Activated CD4-positive, alpha-beta T cell treated with anti-CD3 and anti-CD28 coated beads, Interleukin-2, amount 10 ng/mL, durations not matched to agents 7 days and 5 days (primary cell): ENCODE measurements at regions of chr1 and their contacts with region 1.

Region 1: GRCh38 chr1:156892190-156893047 is 1.1 kb upstream of the PEAR1 start:
- DNase-seq: peak; percentile 87
- H3K4me3 Mint-ChIP-seq: peak overlapping the region; percentile 63
- H3K27ac Mint-ChIP-seq: peak overlapping the region; percentile 65
- H3K4me1 Mint-ChIP-seq: peaks cover 24% of the 10 kb centered on the region
- H3K27me3 Mint-ChIP-seq: peaks cover 50% of the 10 kb centered on the region

Region 2: DNA sequence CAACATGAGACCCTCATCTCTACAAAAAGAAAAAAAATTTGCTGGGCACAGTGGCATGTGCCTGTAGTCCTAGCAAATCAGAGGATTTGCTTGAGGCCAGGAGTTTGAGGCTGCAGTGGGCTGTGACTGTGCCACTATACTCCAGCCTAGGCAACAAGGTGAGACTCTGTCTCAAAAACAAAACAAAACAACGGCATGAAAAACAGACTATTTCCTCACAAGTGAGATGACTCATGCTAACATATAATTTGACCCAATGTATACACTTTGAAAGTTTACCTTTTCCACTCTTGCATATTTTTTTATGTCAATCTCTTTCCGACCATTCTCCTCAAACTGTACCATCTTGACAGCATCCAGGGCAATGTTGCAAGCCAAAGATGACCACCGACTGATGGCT is 571.9 kb before region 1 on chr1:
- CTCF ChIA-PET with region 1: no interaction called
- POLR2A ChIA-PET with region 1: no interaction called
- DNase-seq: no peak
- H3K4me3 Mint-ChIP-seq: no peak overlapping the region
- H3K27ac Mint-ChIP-seq: no peak overlapping the region
- H3K4me1 Mint-ChIP-seq: no peaks in the 10 kb centered on the region
- H3K27me3 Mint-ChIP-seq: no peaks in the 10 kb centered on the region

Region 3: DNA sequence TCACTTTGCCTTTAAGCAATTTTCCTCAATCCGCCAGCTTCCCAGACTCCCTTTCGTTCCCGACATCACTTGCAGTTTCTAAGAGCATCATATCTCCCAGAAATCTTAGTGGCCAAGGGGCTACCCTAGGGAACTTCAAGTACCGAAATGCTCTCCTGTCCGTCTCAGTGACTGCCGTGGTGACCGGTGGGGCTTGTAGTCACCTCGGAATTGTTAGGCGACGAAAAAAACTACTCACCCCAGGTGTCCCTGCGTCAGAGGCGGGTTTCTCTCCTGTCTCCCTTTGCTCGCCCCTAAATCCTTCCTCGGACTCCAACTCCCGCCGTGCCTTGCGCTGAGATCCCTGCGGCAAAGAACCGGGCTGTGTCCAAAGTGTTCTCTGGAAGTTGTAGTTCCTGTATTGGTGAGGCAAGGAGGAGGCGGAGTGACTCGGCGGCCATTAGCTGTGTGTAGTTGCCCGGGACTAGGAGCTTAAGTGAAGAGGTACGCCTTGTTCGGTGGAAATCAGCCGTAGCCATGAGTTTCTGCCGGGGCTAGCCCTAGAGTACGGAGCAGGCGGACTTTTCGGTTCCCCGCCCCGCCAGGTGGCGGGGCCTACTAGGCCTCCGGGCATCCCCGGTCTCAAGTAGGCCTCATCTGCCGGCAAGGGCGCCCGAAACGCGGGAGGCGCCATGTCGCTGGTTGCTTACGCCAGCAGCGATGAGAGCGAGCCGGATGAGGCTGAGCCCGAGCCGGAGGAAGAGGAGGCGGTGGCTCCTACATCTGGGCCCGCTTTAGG is 125.1 kb before region 1 on chr1 and contains the start of gene PRCC:
- CTCF ChIA-PET with region 1: interaction called, 11 read pairs
- POLR2A ChIA-PET with region 1: interaction called, 4 read pairs
- DNase-seq: peak; percentile 99
- H3K4me3 Mint-ChIP-seq: no peak within 1 kb of the TSS
- H3K27ac Mint-ChIP-seq: no peak within 1 kb of the TSS
- H3K4me1 Mint-ChIP-seq: peaks cover 41% of the 10 kb centered on the region
- H3K27me3 Mint-ChIP-seq: no peaks in the 10 kb centered on the region
- total RNA-seq, gene PRCC: 70.6 to 87.7 TPM

Region 4: DNA sequence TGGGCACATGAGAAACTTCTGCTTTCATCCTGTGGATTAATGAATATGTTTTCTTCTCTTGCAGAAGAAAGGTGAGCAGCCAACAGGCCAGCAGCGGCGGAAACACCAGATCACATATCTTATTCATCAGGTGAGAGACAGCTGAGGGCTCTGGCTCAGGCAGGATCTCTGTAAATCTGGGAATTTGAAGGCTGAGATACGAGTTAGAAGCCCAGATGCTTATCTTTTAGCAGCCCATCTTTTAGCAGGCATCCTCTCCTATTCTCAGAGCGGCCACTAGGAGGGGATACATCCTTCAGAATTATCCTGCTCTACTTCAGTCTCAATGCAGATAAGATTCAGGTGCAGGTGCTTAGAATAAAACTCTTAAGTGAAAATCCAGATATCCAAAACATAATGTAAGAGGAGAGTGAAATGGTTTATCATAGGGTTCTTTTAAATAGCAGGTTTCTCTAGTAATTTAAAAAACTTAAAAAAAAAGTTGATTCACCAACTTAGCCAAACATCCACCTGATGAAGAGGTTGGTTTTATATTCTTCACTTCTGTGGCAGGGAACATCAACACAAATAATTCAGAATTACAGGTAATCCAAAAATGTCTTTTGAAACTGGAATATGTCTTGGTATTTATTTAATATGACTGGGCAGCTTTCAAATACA is 95.1 kb before region 1 on chr1:
- CTCF ChIA-PET with region 1: interaction called, 13 read pairs
- POLR2A ChIA-PET with region 1: no interaction called
- DNase-seq: peak; percentile 77
- H3K4me3 Mint-ChIP-seq: no peak overlapping the region
- H3K27ac Mint-ChIP-seq: no peak overlapping the region
- H3K4me1 Mint-ChIP-seq: peaks cover 20% of the 10 kb centered on the region
- H3K27me3 Mint-ChIP-seq: no peaks in the 10 kb centered on the region

Region 5: DNA sequence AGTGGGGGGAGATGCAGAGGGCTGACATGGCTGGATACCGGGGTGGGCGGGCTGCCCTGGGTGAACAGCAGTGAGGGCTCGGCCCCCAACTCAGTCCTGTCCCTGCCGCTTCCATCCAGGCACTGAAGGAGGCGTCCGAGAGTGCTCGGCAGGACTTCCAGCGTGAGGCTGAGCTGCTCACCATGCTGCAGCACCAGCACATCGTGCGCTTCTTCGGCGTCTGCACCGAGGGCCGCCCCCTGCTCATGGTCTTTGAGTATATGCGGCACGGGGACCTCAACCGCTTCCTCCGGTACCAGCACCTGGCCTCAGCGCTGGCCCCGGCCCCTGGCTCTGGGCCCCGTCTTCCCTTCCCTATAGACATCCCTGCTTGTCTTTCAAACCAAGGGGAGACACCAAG is 16.1 kb before region 1 on chr1:
- CTCF ChIA-PET with region 1: interaction called, 11 read pairs
- POLR2A ChIA-PET with region 1: no interaction called
- DNase-seq: no peak
- H3K4me3 Mint-ChIP-seq: no peak overlapping the region
- H3K27ac Mint-ChIP-seq: no peak overlapping the region
- H3K4me1 Mint-ChIP-seq: no peaks in the 10 kb centered on the region
- H3K27me3 Mint-ChIP-seq: peaks cover 23% of the 10 kb centered on the region

Region 6: DNA sequence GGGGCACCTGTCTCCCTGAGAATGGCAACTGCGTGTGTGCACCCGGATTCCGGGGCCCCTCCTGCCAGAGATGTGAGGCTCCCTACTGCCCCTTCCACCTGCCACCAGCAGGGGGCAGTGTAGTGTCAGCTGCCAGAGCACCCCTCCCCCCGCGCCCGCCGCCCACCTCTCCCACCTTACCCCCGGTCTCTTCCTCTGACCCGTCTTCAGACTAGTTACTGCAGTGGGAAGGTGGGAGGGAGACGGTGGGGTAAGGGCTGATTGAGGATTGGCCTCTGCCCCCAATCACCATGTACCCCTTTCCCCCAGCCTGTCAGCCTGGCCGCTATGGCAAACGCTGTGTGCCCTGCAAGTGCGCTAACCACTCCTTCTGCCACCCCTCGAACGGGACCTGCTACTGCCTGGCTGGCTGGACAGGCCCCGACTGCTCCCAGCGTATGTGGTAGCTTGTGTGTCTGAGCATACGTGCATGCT is 17.9 kb after region 1 on chr1:
- CTCF ChIA-PET with region 1: interaction called, 10 read pairs
- POLR2A ChIA-PET with region 1: no interaction called
- DNase-seq: peak; percentile 57
- H3K4me3 Mint-ChIP-seq: no peak overlapping the region
- H3K27ac Mint-ChIP-seq: no peak overlapping the region
- H3K4me1 Mint-ChIP-seq: peaks cover 1% of the 10 kb centered on the region
- H3K27me3 Mint-ChIP-seq: peaks cover 4% of the 10 kb centered on the region

Region 7: GRCh38 chr1:157025856-157026255 is 133.4 kb after region 1 on chr1:
- CTCF ChIA-PET with region 1: no interaction called
- POLR2A ChIA-PET with region 1: no interaction called
- DNase-seq: no peak
- H3K4me3 Mint-ChIP-seq: no peak overlapping the region
- H3K27ac Mint-ChIP-seq: no peak overlapping the region
- H3K4me1 Mint-ChIP-seq: no peaks in the 10 kb centered on the region
- H3K27me3 Mint-ChIP-seq: peaks cover 60% of the 10 kb centered on the region